Brain microvascular endothelial cell (primary cell): ENCODE measurements at regions of chr1 and their contacts with region 1.

Region 1: DNA sequence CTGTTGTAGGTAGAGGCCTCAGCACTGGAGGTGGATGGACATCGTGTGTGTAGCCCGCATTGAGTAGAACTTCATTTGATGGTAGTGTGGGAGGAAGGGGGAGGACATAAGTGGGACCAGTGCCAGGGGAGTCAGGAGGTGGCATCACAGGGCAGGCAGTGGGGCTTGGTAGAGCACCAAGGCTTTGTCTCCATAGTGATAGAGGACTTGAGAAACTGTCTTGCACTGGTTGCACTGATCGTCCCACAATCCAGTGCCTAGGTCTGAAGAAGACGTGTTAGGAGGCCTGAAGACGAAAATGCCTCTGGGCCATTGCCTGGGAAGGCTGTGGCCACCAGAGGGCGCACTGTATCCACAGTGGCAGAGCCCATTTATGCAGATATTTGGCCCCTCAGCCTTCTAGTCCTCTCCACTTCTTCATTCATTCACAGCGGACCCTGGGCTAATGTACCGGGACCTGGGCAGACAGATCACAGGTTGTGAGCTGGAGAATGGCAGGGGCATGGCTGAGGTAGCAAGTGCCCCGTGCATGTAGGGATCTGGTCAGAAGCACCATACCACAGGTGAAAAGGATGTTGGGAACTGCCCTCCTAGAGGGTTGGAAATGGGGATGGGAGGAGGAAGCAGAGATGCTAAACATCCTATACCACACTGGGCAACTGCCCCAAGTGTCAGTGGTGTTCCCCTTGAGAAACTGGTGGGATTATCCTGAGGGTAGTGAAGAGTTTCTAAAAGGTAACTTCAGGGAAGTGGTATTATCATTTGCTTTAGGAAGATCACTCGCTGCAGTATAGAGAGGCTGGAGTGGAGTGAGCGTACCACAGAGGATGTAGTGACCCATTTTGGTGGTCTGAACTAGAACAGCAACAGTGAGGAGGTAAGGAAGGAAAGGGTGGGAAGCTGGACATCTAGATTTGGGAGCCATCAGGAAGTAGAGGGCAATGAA is 95.3 kb downstream of the PIK3R3 start:
- DNase-seq: peak; percentile 86
- H3K4me3 ChIP-seq: no peak overlapping the region
- H3K27ac ChIP-seq: no peak overlapping the region
- H3K27me3 ChIP-seq: no peaks in the 10 kb centered on the region
- CTCF ChIP-seq: peak; percentile 97

Region 2: DNA sequence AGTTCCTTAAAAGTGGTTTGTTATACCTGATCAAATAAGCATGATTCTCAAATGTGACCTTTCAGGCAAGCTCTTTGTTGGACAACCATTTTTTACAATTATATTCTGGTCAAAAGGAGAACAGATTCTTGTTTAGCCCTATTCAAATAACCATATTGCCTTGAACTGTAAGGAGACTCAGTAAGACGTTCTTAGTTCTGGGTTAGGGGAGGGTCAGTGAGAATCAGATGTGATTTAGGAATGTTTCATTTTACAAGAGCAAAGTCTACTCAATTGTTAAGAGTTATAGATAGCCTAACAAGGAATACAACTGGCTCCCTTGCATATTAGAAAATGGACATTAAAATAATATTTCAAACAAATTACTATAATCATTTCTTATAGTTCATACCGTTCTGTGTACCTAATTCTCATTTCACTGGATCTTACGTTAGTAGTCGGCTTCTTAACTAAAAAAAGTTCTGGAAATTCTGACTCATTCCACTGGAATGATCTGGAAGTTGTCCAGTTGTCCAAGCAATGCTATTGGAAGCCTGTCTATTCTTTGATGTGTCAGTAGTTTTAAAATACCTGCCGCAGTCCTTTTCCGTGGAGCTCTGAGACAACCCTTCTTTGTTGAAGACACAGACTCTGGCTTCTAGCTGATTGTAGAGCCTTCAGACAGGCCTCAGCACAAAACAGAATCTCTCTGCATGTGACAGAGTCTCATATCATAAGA is 144.9 kb before region 1 on chr1:
- in situ Hi-C with region 1: no loop called
- DNase-seq: peak; percentile 91
- H3K4me3 ChIP-seq: no peak overlapping the region
- H3K27ac ChIP-seq: peak overlapping the region; percentile 65
- H3K27me3 ChIP-seq: no peaks in the 10 kb centered on the region
- CTCF ChIP-seq: no peak

Region 3: GRCh38 chr1:45995298-45995697 is 41.9 kb before region 1 on chr1:
- in situ Hi-C with region 1: no loop called
- DNase-seq: no peak
- H3K4me3 ChIP-seq: no peak overlapping the region
- H3K27ac ChIP-seq: no peak overlapping the region
- H3K27me3 ChIP-seq: no peaks in the 10 kb centered on the region
- CTCF ChIP-seq: no peak

Region 4: DNA sequence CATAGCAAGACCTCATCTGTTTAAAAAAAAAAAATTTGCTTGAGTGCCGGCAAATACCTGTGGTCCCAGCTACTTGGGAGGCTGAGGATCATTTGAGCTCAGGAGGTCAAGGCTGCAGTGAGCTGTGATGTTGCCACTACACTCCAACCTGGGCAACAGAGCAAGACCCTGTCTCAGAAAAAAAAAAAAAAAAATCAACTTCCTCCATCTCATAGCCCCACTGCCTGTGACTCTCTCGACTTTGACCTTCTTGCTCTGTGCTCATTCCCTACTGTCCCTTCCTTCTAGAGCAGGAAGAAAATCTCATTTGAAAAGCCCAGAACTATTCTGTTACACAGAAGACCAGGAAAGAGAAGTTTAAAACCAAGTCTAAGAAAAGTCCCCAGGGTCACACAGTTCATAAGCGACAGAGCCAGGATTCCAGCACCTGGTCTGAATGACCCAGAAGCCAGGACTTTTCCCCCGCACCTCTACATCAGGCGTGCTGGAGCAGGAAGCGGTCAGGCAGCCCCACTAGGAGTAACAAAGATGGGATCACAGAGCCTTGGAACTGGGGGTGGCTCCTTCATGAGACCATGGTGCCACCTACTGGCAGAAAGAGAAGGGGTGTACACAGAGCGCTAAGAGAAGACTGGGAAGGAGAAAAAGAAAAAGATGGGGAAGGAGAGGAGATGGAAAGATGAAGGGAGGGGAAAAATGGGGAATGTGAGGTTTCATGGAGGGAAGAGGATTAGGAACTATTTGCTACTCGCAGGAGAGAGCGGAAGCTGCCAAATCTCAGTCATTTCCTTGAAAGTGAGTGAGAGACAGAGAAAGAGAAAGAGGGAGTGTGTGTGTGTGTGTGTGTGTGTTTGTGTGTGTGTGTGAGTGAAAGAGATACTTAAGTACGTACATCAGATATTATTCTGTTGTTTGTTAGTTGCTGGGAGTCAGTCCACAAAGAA is 142.2 kb after region 1 on chr1:
- in situ Hi-C with region 1: loop called (anchors 10 kb)
- DNase-seq: peak; percentile 79
- H3K4me3 ChIP-seq: no peak overlapping the region
- H3K27ac ChIP-seq: no peak overlapping the region
- H3K27me3 ChIP-seq: no peaks in the 10 kb centered on the region
- CTCF ChIP-seq: peak; percentile 97